ENCODE measurements at regions of chr4 and their contacts with region 1.

Region 1: GRCh38 chr4:99949034-99949998 is 759 bp downstream of the H2AZ1 start:
- DNase-seq: peak; percentile 91
- H3K4me3 ChIP-seq: peak overlapping the region; percentile 66 to 87 (median 86)
- H3K27ac ChIP-seq: peak overlapping the region; percentile 75
- H3K4me1 ChIP-seq: peaks cover 38% of the 10 kb centered on the region
- H3K27me3 ChIP-seq: no peaks in the 10 kb centered on the region
- CTCF ChIP-seq: peak; percentile 83 to 91
- POLR2A ChIP-seq: no peak

Region 2: GRCh38 chr4:99783940-99784339 is 165.4 kb before region 1 on chr4:
- CTCF ChIA-PET with region 1: no interaction called
- POLR2A ChIA-PET with region 1: no interaction called
- dilution Hi-C with region 1: no loop called
- intact Hi-C with region 1: no loop called
- DNase-seq: no peak
- H3K4me3 ChIP-seq: no peak overlapping the region
- H3K27ac ChIP-seq: no peak overlapping the region
- H3K4me1 ChIP-seq: no peaks in the 10 kb centered on the region
- H3K27me3 ChIP-seq: no peaks in the 10 kb centered on the region
- CTCF ChIP-seq: no peak
- POLR2A ChIP-seq: no peak

Region 3: GRCh38 chr4:99894161-99894997 is 54.9 kb before region 1 on chr4 and contains the start of gene LAMTOR3:
- CTCF ChIA-PET with region 1: interaction called, 10 read pairs
- POLR2A ChIA-PET with region 1: interaction called, 8 read pairs
- dilution Hi-C with region 1: no loop called
- intact Hi-C with region 1: loop called (anchors 1 kb)
- DNase-seq: peak; percentile 83
- H3K4me3 ChIP-seq: peak within 1 kb of the TSS; percentile 97 to 98 (median 98)
- H3K27ac ChIP-seq: peak within 1 kb of the TSS; percentile 98
- H3K4me1 ChIP-seq: peaks cover 16% of the 10 kb centered on the region
- H3K27me3 ChIP-seq: no peaks in the 10 kb centered on the region
- CTCF ChIP-seq: no peak
- POLR2A ChIP-seq: peak; percentile 36
- total RNA-seq, gene LAMTOR3: 25.3 and 29.1 TPM in 2 replicates

Region 4: GRCh38 chr4:100008048-100008447 is 58.7 kb after region 1 on chr4:
- CTCF ChIA-PET with region 1: no interaction called
- POLR2A ChIA-PET with region 1: no interaction called
- dilution Hi-C with region 1: no loop called
- intact Hi-C with region 1: no loop called
- DNase-seq: no peak
- H3K4me3 ChIP-seq: no peak overlapping the region
- H3K27ac ChIP-seq: no peak overlapping the region
- H3K4me1 ChIP-seq: no peaks in the 10 kb centered on the region
- H3K27me3 ChIP-seq: no peaks in the 10 kb centered on the region
- CTCF ChIP-seq: no peak
- POLR2A ChIP-seq: no peak

Measured in endothelial cell of umbilical vein (primary cell).